ENCODE measurements at regions of chr13 and their contacts with region 1.

Region 1: GRCh38 chr13:48492470-48493065 is 40.3 kb downstream of the RCBTB2 start:
- DNase-seq: peak; percentile 68
- H3K4me3 Mint-ChIP-seq: no peak overlapping the region
- H3K27ac Mint-ChIP-seq: no peak overlapping the region
- H3K4me1 Mint-ChIP-seq: peaks cover 39% of the 10 kb centered on the region
- H3K27me3 Mint-ChIP-seq: no peaks in the 10 kb centered on the region

Region 2: DNA sequence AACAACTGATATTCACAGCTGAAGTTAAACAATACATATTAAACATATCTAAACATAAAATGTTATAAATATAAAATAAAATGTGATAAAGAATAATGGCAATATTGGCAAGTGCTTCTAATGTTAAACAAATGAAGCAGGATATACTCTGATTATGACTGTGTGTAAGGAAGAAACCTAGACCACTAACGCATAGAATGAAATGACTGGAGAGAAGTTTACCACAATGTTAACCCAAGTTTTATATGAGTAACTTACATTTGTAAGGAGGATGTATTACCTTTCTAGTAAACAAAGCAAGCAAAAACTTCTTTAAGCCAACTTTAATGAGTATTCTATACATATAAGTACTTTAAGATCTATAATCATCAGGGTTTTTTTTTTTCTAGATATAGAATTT is 146.0 kb before region 1 on chr13:
- intact Hi-C with region 1: loop called (anchors 5 kb)
- DNase-seq: no peak
- H3K4me3 Mint-ChIP-seq: no peak overlapping the region
- H3K27ac Mint-ChIP-seq: no peak overlapping the region
- H3K4me1 Mint-ChIP-seq: peaks cover 26% of the 10 kb centered on the region
- H3K27me3 Mint-ChIP-seq: no peaks in the 10 kb centered on the region

Region 3: DNA sequence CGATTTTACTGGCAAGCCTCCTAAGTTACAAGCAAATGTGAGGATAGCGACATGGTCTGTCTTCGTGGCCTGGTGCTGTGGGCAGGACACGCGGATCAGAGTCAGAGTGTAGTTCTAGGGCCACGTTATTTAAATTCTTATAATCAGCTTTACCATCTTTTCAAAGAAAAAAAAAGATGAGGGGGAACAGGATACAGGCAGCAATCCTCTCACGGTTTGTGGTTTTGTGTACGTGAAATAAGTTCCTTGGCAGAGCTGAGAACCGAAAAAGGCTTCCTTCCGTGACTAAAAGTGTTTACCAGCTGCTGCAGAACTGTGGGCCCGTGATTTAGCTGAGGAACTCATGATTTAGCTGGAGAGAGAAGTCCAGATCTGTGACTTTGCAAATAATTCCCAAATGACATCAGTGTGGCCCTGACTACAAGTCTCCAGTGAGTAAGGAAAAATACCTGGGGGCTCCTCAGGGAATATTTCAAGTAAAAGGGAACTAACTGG is 13.1 kb after region 1 on chr13:
- intact Hi-C with region 1: loop called (anchors 1 kb)
- DNase-seq: peak; percentile 57
- H3K4me3 Mint-ChIP-seq: peak overlapping the region; percentile 38
- H3K27ac Mint-ChIP-seq: peak overlapping the region; percentile 62
- H3K4me1 Mint-ChIP-seq: peaks cover 68% of the 10 kb centered on the region
- H3K27me3 Mint-ChIP-seq: peaks cover 4% of the 10 kb centered on the region

Region 4: DNA sequence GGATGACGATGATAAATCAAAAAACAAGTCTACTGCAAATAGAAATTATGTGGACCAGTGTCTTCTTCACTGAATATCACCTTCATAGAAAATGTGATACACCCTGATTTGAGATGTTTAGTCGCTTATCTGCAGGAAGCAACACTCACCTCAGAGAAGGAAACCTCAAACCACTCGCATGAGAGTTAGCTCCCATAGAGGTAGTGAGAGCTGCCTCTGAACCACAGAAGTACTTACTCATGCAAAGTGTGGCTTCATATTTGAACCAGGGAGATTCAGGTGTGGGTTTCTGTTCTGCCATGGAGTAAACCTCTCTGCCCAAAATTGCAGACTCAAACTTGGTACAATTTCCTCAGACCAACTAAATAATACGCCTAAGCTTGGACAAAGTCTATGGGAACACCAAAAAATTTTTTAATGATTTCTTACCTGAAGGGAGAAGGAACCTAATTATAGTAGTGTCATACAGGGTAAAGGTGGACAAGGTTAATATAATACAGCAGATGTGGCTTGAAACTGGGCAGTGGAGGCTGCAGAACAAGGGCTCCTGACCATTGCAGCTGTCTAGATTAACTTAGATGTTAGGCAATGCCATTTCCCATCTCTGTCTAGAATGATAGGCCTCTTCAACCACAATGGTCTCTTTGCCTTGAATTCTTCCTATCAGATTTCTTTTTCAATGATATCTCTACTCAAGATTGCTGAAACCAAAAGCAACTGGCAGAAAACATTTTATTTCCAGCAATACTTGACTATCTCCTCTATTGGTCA is 69.9 kb after region 1 on chr13:
- intact Hi-C with region 1: loop called (anchors 1 kb)
- DNase-seq: peak; percentile 77
- H3K4me3 Mint-ChIP-seq: no peak overlapping the region
- H3K27ac Mint-ChIP-seq: no peak overlapping the region
- H3K4me1 Mint-ChIP-seq: peaks cover 59% of the 10 kb centered on the region
- H3K27me3 Mint-ChIP-seq: peaks cover 68% of the 10 kb centered on the region

Measured in activated T-helper 1 cell treated with anti-CD3 and anti-CD28 coated beads, Interleukin-12 subunit alpha, Interleukin-12 subunit beta, Interleukin-2, Interleukin-4 antibody, amounts not matched to agents 30 ng/mL and 10 ng/mL and 1 ng/mL, durations not matched to agents 14 hours and 24 hours and 36 hours (primary cell).